HCT116 (cell line): ENCODE measurements at regions of chr15 and their contacts with region 1.

Region 1: GRCh38 chr15:90320061-90320884 is 31.8 kb upstream of the ZNF774 start:
- DNase-seq: peak; percentile 81
- ATAC-seq: peak; percentile 98
- H3K4me3 ChIP-seq: peak overlapping the region in 1 of 2 experiments; percentile 25; a peak in 1 of 4 replicates
- H3K27ac ChIP-seq: no peak overlapping the region
- H3K4me1 ChIP-seq: peaks cover 7 to 10% of the 10 kb centered on the region in 2 experiments; a peak in 2 of 4 replicates
- H3K27me3 ChIP-seq: no peaks in the 10 kb centered on the region
- CTCF ChIP-seq: peak; percentile 97 to 100 (median 99)
- POLR2A ChIP-seq: no peak
- RAD21 ChIP-seq: peak; percentile 97

Region 2: GRCh38 chr15:89975482-89976245 is 344.6 kb before region 1 on chr15:
- CTCF ChIA-PET with region 1: no interaction called
- POLR2A ChIA-PET with region 1: no interaction called
- RAD21 ChIA-PET with region 1: no interaction called
- intact Hi-C with region 1: no loop called
- DNase-seq: no peak
- ATAC-seq: no peak
- H3K4me3 ChIP-seq: no peak overlapping the region
- H3K27ac ChIP-seq: no peak overlapping the region
- H3K4me1 ChIP-seq: peaks cover 0 to 11% of the 10 kb centered on the region in 2 experiments; a peak in 2 of 4 replicates
- H3K27me3 ChIP-seq: no peaks in the 10 kb centered on the region
- CTCF ChIP-seq: no peak
- POLR2A ChIP-seq: no peak
- RAD21 ChIP-seq: no peak

Region 3: GRCh38 chr15:90291679-90292356 is 28.5 kb before region 1 on chr15:
- CTCF ChIA-PET with region 1: interaction called, 12 read pairs
- POLR2A ChIA-PET with region 1: no interaction called
- RAD21 ChIA-PET with region 1: no interaction called
- intact Hi-C with region 1: no loop called
- DNase-seq: peak; percentile 71
- ATAC-seq: peak; percentile 58
- H3K4me3 ChIP-seq: no peak overlapping the region
- H3K27ac ChIP-seq: no peak overlapping the region
- H3K4me1 ChIP-seq: peaks cover 7 to 24% of the 10 kb centered on the region in 2 experiments; a peak in 3 of 4 replicates
- H3K27me3 ChIP-seq: no peaks in the 10 kb centered on the region
- CTCF ChIP-seq: no peak
- POLR2A ChIP-seq: no peak
- RAD21 ChIP-seq: no peak

Region 4: GRCh38 chr15:90306560-90306959 is 13.7 kb before region 1 on chr15:
- CTCF ChIA-PET with region 1: interaction called, 13 read pairs
- POLR2A ChIA-PET with region 1: no interaction called
- RAD21 ChIA-PET with region 1: no interaction called
- intact Hi-C with region 1: no loop called
- DNase-seq: no peak
- ATAC-seq: no peak
- H3K4me3 ChIP-seq: no peak overlapping the region
- H3K27ac ChIP-seq: no peak overlapping the region
- H3K4me1 ChIP-seq: peaks cover 0 to under 1% of the 10 kb centered on the region in 2 experiments; a peak in 1 of 4 replicates
- H3K27me3 ChIP-seq: no peaks in the 10 kb centered on the region
- CTCF ChIP-seq: no peak
- POLR2A ChIP-seq: no peak
- RAD21 ChIP-seq: no peak

Region 5: GRCh38 chr15:90618330-90619125 is 298.3 kb after region 1 on chr15:
- CTCF ChIA-PET with region 1: no interaction called
- POLR2A ChIA-PET with region 1: no interaction called
- RAD21 ChIA-PET with region 1: no interaction called
- intact Hi-C with region 1: loop called (anchors 10 kb)
- DNase-seq: no peak
- ATAC-seq: no peak
- H3K4me3 ChIP-seq: no peak overlapping the region
- H3K27ac ChIP-seq: no peak overlapping the region
- H3K4me1 ChIP-seq: no peaks in the 10 kb centered on the region
- H3K27me3 ChIP-seq: no peaks in the 10 kb centered on the region
- CTCF ChIP-seq: no peak
- POLR2A ChIP-seq: no peak
- RAD21 ChIP-seq: no peak

Region 6: GRCh38 chr15:90691982-90692773 is 371.9 kb after region 1 on chr15:
- CTCF ChIA-PET with region 1: no interaction called
- POLR2A ChIA-PET with region 1: no interaction called
- RAD21 ChIA-PET with region 1: no interaction called
- intact Hi-C with region 1: loop called (anchors 1 kb)
- DNase-seq: no peak
- ATAC-seq: no peak
- H3K4me3 ChIP-seq: no peak overlapping the region
- H3K27ac ChIP-seq: no peak overlapping the region
- H3K4me1 ChIP-seq: 0 out of 4 replicates have a peak, but pooled peaks cover 0 to 3% of the 10 kb centered on the region in 2 experiments
- H3K27me3 ChIP-seq: no peaks in the 10 kb centered on the region
- CTCF ChIP-seq: no peak
- POLR2A ChIP-seq: no peak
- RAD21 ChIP-seq: no peak

Region 7: GRCh38 chr15:90931737-90932659 is 611.7 kb after region 1 on chr15 and contains the start of gene HDDC3:
- CTCF ChIA-PET with region 1: interaction called, 6 read pairs
- POLR2A ChIA-PET with region 1: interaction called, 5 read pairs
- RAD21 ChIA-PET with region 1: no interaction called
- intact Hi-C with region 1: loop called (anchors 1 kb)
- DNase-seq: peak; percentile 87
- ATAC-seq: peak; percentile 59
- H3K4me3 ChIP-seq: peak within 1 kb of the TSS; percentile 92 to 93
- H3K27ac ChIP-seq: peak within 1 kb of the TSS; percentile 78
- H3K4me1 ChIP-seq: peaks cover 20 to 53% of the 10 kb centered on the region in 2 experiments; a peak in 3 of 4 replicates
- H3K27me3 ChIP-seq: no peaks in the 10 kb centered on the region
- CTCF ChIP-seq: peak in 2 of 3 experiments; percentile 84 to 92; a peak in 4 of 6 replicates
- POLR2A ChIP-seq: peak; percentile 56
- RAD21 ChIP-seq: no peak
- total RNA-seq, gene HDDC3: 20.4 TPM